ENCODE measurements at regions of chr7 and their contacts with region 1.

Region 1: DNA sequence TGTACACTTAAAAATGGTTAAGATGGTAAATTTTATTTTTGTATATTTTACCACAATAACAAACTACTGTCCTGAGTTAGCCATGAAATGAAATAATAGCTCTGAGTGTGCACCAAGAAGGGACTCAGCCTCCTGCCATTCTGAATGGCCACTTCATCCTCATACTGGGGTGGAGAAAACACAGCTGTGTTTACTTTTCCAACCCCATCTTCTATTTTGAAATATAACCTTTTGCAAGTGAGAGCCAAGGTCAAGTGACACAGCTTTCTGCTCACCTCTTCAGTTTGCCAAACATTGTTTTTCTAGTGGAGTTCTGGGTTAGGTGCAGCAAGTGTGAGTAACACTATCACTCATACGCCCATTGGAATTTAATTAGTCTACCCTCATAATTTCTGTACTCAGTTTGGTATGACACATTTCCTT is 107.4 kb upstream of the GLCCI1 start:
- DNase-seq: no peak
- ATAC-seq: peak; percentile 66 to 91 (median 80)
- H3K4me3 ChIP-seq: no peak overlapping the region
- H3K27ac ChIP-seq: peak overlapping the region; percentile 50
- H3K4me1 ChIP-seq: peaks cover 52% of the 10 kb centered on the region
- H3K27me3 ChIP-seq: no peaks in the 10 kb centered on the region
- CTCF ChIP-seq: no peak

Region 2: GRCh38 chr7:7424151-7424873 is 436.9 kb before region 1 on chr7:
- intact Hi-C with region 1: no loop called
- DNase-seq: peak; percentile 37 to 59
- ATAC-seq: peak; percentile 76 to 98 (median 90)
- H3K4me3 ChIP-seq: peak overlapping the region; percentile 49
- H3K27ac ChIP-seq: no peak overlapping the region
- H3K4me1 ChIP-seq: no peaks in the 10 kb centered on the region
- H3K27me3 ChIP-seq: no peaks in the 10 kb centered on the region
- CTCF ChIP-seq: peak; percentile 74

Region 3: DNA sequence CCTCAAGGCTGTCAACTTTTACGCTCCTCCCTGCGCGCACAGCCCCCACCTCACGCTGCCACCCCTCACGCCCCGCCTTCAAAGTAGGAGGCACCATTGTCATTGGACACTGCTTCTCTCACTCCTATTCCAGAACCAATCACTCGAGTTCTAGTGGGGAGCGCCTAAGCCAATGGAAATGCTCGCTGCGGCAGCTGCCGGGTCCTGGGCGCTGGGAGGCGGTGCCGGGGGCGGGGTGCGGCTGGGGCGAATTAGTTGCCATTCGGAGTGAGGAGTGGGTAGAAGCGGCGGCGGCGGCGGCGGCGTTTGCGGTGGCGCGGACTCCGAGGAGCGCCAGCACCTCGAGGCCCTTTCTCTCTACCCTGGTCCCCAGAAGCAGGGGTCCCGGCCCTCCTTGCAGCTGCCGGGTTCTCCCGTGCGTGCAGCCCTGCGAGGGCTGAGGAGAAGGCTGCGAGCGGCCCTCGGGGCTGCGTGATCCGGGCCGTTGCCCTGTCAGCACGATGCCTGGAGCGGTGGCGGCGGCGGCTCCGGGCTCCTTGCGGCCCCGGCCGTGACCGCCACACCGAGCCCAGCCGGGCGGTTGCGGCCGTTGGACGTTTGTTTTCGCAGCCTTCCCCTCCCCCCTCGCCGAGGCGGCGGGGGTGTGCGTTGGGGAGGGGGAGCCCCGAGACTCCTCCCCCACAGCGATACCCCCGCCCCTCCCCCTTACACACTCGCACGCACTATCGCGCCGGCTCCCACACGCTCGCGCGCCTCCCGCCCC is 107.5 kb after region 1 on chr7 and contains the start of gene GLCCI1:
- intact Hi-C with region 1: loop called in 1 of 2 experiments (anchors 5 kb)
- DNase-seq: peak; percentile 95 to 97
- ATAC-seq: peak; percentile 98 to 99 (median 99)
- H3K4me3 ChIP-seq: peak within 1 kb of the TSS; percentile 99
- H3K27ac ChIP-seq: peak within 1 kb of the TSS; percentile 96
- H3K4me1 ChIP-seq: peaks cover 15% of the 10 kb centered on the region
- H3K27me3 ChIP-seq: no peaks in the 10 kb centered on the region
- CTCF ChIP-seq: no peak
- total RNA-seq, gene GLCCI1: 2.8 to 8.0 (median 4.1) TPM